Calu3 (cell line): ENCODE measurements at regions of chr7 and their contacts with region 1.

Region 1: DNA sequence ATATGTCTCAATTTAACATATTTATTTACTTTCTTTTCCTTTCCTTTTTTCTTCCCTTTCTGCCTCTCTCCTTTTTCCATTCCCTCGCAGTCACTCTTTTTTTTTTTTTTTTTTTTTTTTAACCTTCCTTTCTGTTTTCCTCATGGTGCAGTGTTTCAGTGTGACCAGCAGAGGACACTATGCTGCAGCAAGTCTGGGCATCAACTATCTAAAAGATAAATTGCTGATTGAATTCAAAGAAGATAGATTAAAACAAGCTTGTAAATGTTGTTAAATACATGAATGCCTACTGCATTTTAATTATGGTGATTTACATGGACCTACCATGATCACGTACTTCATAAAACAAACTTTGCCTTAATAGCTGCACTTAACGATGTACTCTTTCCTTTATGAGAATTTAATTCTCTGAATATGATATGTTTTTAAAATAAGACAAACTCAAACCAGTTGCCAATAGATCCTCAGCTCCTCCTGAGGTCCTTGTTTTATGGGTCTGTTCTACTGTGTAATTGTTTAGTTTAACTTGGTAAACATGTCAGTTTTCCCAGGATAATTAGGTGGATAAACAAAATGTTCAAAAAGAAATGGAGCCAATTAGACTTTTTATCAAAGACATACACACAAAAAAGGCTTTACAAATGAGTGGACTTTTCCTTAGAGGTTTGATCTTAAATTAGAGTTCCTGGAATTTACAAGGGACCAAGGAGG is 101.0 kb upstream of the AGR3 start:
- DNase-seq: peak; percentile 52
- H3K4me3 Mint-ChIP-seq: peak overlapping the region; percentile 15
- H3K27ac Mint-ChIP-seq: peak overlapping the region; percentile 13
- H3K4me1 Mint-ChIP-seq: peaks cover 75% of the 10 kb centered on the region
- H3K27me3 Mint-ChIP-seq: no peaks in the 10 kb centered on the region
- CTCF ChIP-seq: peak; percentile 88

Region 2: GRCh38 chr7:16881844-16882243 is 101.0 kb before region 1 on chr7 and contains the start of gene AGR3:
- CTCF ChIA-PET with region 1: no interaction called
- intact Hi-C with region 1: no loop called
- DNase-seq: peak; percentile 51
- H3K4me3 Mint-ChIP-seq: no peak within 1 kb of the TSS
- H3K27ac Mint-ChIP-seq: peak within 1 kb of the TSS; percentile 60
- H3K4me1 Mint-ChIP-seq: peaks cover 14% of the 10 kb centered on the region
- H3K27me3 Mint-ChIP-seq: no peaks in the 10 kb centered on the region
- CTCF ChIP-seq: no peak
- total RNA-seq, gene AGR3: 8.4 and 11.0 TPM in 2 replicates

Region 3: GRCh38 chr7:17009007-17009719 is 26.4 kb after region 1 on chr7:
- CTCF ChIA-PET with region 1: interaction called, 33 read pairs
- intact Hi-C with region 1: no loop called
- DNase-seq: no peak
- H3K4me3 Mint-ChIP-seq: no peak overlapping the region
- H3K27ac Mint-ChIP-seq: peak overlapping the region; percentile 58
- H3K4me1 Mint-ChIP-seq: peaks cover 87% of the 10 kb centered on the region
- H3K27me3 Mint-ChIP-seq: no peaks in the 10 kb centered on the region
- CTCF ChIP-seq: peak; percentile 67

Region 4: DNA sequence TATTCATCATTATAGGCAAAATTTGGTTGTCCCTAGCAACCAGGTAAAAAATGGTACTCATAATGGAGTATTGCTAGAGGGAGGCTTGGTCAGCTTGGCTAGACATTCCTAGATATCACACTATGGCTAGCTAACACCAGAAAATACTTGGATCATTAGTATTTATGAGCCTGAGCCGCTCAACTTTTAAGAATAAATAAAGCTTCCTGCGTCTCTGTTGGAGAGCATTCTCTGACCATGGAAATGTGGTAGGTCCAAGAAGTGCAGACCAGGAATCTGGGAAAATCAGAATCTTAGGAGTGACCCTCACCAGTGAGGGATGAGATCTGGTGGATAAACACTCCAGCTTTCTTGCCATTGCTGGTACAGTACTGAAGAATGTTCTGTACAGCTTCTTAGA is 56.6 kb after region 1 on chr7:
- CTCF ChIA-PET with region 1: no interaction called
- intact Hi-C with region 1: no loop called
- DNase-seq: no peak
- H3K4me3 Mint-ChIP-seq: no peak overlapping the region
- H3K27ac Mint-ChIP-seq: peak overlapping the region; percentile 91
- H3K4me1 Mint-ChIP-seq: peaks cover 70% of the 10 kb centered on the region
- H3K27me3 Mint-ChIP-seq: no peaks in the 10 kb centered on the region
- CTCF ChIP-seq: no peak

Region 5: DNA sequence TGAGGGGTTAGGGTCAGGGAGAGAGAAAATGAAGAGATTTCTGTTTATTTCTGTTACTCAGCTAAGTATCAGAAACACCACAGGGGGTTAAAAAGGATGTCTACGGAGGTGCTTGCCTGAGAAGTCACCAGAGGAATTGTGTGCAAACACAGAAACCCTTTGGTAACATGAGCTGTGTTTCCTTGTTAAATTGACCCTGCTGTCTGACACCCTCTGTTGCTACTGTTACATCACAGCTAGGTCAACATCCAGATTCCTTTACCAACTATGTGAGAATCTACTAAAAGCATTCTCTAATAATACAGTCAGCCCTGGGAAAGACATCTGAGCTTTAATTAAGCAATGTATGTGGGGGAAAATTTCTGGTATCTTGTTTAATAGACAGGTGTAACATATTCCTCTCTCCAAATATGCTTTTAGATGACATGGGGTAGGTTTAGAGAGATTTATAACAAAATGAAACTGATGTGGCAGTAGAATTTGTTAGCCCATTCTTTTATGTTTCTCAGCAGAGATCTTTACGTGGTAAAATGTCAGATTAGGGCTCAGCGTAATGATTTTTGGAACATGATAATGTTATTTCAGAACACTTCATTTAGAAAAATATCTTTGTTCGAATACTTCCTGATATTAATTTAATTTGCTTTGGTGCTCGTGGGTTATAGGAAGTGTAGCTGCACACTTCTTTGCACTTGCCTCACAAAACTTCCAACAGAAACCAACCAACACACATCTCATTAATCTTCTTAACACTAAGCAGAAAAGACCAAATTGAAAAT is 147.7 kb after region 1 on chr7:
- CTCF ChIA-PET with region 1: interaction called, 29 read pairs
- intact Hi-C with region 1: loop called (anchors 2 kb)
- DNase-seq: peak; percentile 78
- H3K4me3 Mint-ChIP-seq: peak overlapping the region; percentile 62
- H3K27ac Mint-ChIP-seq: peak overlapping the region; percentile 100
- H3K4me1 Mint-ChIP-seq: peaks cover 86% of the 10 kb centered on the region
- H3K27me3 Mint-ChIP-seq: no peaks in the 10 kb centered on the region
- CTCF ChIP-seq: no peak

Region 6: DNA sequence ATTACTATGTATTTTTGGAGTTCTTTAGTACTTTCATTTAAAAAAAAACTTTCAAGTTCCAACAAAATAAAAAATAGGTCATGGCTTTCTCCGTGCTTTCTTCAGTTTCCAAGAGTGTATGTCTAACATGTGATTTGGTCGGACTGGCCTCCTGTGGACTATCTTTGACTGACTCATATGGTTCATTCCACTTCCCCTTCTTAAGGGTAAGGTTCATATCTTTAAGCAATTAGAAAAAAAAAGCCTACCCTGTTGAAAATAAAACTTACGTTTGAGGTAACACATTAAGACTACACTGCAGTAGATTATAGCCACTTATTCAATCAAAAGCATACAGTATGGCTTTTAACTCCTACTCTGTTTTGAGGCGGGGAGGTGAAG is 202.9 kb after region 1 on chr7:
- CTCF ChIA-PET with region 1: no interaction called
- intact Hi-C with region 1: loop called (anchors 1 kb)
- DNase-seq: no peak
- H3K4me3 Mint-ChIP-seq: peak overlapping the region; percentile 4
- H3K27ac Mint-ChIP-seq: peak overlapping the region; percentile 86
- H3K4me1 Mint-ChIP-seq: peaks cover 57% of the 10 kb centered on the region
- H3K27me3 Mint-ChIP-seq: no peaks in the 10 kb centered on the region
- CTCF ChIP-seq: no peak

Region 7: GRCh38 chr7:17298207-17298839 is 315.5 kb after region 1 on chr7 and contains the start of gene AHR:
- CTCF ChIA-PET with region 1: interaction called, 17 read pairs
- intact Hi-C with region 1: loop called (anchors 1 kb)
- DNase-seq: peak; percentile 96
- H3K4me3 Mint-ChIP-seq: peak within 1 kb of the TSS; percentile 85
- H3K27ac Mint-ChIP-seq: peak within 1 kb of the TSS; percentile 93
- H3K4me1 Mint-ChIP-seq: peaks cover 28% of the 10 kb centered on the region
- H3K27me3 Mint-ChIP-seq: no peaks in the 10 kb centered on the region
- CTCF ChIP-seq: no peak
- total RNA-seq, gene AHR: 280 and 288 TPM in 2 replicates

Region 8: GRCh38 chr7:17646253-17646956 is 663.6 kb after region 1 on chr7:
- CTCF ChIA-PET with region 1: interaction called, 6 read pairs
- intact Hi-C with region 1: loop called (anchors 5 kb)
- DNase-seq: peak; percentile 26
- H3K4me3 Mint-ChIP-seq: no peak overlapping the region
- H3K27ac Mint-ChIP-seq: no peak overlapping the region
- H3K4me1 Mint-ChIP-seq: peaks cover 10% of the 10 kb centered on the region
- H3K27me3 Mint-ChIP-seq: no peaks in the 10 kb centered on the region
- CTCF ChIP-seq: peak; percentile 10